GM12878 (cell line): ENCODE measurements at regions of chr13 and their contacts with region 1.

Region 1: DNA sequence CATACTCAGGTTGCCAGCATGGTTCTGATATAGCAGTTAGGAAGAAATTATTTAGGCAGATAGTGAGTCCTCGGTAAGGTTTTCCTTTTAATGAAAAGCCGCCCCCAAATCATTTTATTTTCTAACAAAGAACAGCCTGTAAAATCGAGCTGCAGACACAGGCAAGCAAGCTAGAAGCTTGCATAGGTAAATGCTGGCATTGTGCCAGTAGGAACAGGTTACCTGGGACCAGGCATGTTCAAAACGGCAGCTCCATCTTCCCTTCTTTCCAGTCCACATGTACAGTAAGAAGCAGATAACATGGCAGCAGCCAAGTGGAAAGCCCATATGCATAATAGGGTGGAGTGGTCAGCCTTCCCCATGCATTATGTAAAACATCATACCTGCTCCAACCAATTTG is 71.1 kb downstream of the UGGT2 start:
- DNase-seq: no peak
- ATAC-seq: no peak
- H3K4me3 ChIP-seq: no peak overlapping the region
- H3K27ac ChIP-seq: no peak overlapping the region
- H3K4me1 ChIP-seq: no peaks in the 10 kb centered on the region
- H3K27me3 ChIP-seq: no peaks in the 10 kb centered on the region
- CTCF ChIP-seq: no peak
- EP300 ChIP-seq: no peak
- POLR2A ChIP-seq: no peak
- RAD21 ChIP-seq: no peak

Region 2: GRCh38 chr13:95536632-95537241 is 445.4 kb before region 1 on chr13:
- CTCF ChIA-PET with region 1: interaction called, 4 read pairs
- POLR2A ChIA-PET with region 1: no interaction called
- RAD21 ChIA-PET with region 1: interaction called, 3 read pairs
- SMC1A ChIA-PET with region 1: interaction called, 3 read pairs
- in situ Hi-C with region 1: no loop called
- intact Hi-C with region 1: loop called (anchors 5 kb)
- DNase-seq: no peak
- ATAC-seq: peak; percentile 34; the same call in 2 of the 3 replicates
- H3K4me3 ChIP-seq: no peak overlapping the region
- H3K27ac ChIP-seq: no peak overlapping the region
- H3K4me1 ChIP-seq: no peaks in the 10 kb centered on the region
- H3K27me3 ChIP-seq: no peaks in the 10 kb centered on the region
- CTCF ChIP-seq: peak; percentile 34 to 50 (median 47); a peak in 5 of 6 replicates
- EP300 ChIP-seq: no peak
- POLR2A ChIP-seq: no peak
- RAD21 ChIP-seq: peak; percentile 51

Region 3: DNA sequence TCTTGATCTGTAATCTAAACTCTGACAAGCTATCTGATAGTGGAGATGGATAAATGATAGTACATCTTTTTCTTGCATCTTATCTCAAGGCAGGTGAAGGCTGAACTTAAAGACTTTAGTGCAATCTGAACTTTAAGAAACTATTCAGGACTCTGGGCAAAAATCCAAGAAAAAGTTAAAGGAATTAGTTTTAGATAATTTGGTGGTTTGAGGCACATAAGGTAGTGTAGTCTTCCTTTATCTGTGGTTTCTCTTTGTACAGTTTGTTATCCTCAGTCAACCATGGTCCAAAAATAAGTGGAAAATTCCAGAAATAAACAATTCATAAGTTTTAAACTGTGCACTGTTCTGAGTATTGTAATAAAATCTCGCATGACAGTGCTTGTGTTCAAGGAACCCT is 101.8 kb before region 1 on chr13:
- CTCF ChIA-PET with region 1: no interaction called
- POLR2A ChIA-PET with region 1: no interaction called
- RAD21 ChIA-PET with region 1: no interaction called
- SMC1A ChIA-PET with region 1: no interaction called
- in situ Hi-C with region 1: no loop called
- intact Hi-C with region 1: loop called (anchors 5 kb)
- DNase-seq: no peak
- ATAC-seq: no peak
- H3K4me3 ChIP-seq: no peak overlapping the region
- H3K27ac ChIP-seq: no peak overlapping the region
- H3K4me1 ChIP-seq: no peaks in the 10 kb centered on the region
- H3K27me3 ChIP-seq: no peaks in the 10 kb centered on the region
- CTCF ChIP-seq: no peak
- EP300 ChIP-seq: no peak
- POLR2A ChIP-seq: no peak
- RAD21 ChIP-seq: no peak

Region 4: GRCh38 chr13:95955255-95955654 is 26.9 kb before region 1 on chr13:
- CTCF ChIA-PET with region 1: no interaction called
- POLR2A ChIA-PET with region 1: no interaction called
- RAD21 ChIA-PET with region 1: no interaction called
- SMC1A ChIA-PET with region 1: no interaction called
- in situ Hi-C with region 1: no loop called
- intact Hi-C with region 1: no loop called
- DNase-seq: no peak
- ATAC-seq: peak; percentile 72
- H3K4me3 ChIP-seq: no peak overlapping the region
- H3K27ac ChIP-seq: no peak overlapping the region
- H3K4me1 ChIP-seq: no peaks in the 10 kb centered on the region
- H3K27me3 ChIP-seq: no peaks in the 10 kb centered on the region
- CTCF ChIP-seq: no peak
- EP300 ChIP-seq: no peak
- POLR2A ChIP-seq: no peak
- RAD21 ChIP-seq: no peak

Region 5: GRCh38 chr13:95968906-95969305 is 13.2 kb before region 1 on chr13:
- CTCF ChIA-PET with region 1: interaction called, 29 read pairs
- POLR2A ChIA-PET with region 1: no interaction called
- RAD21 ChIA-PET with region 1: no interaction called
- SMC1A ChIA-PET with region 1: interaction called, 10 read pairs
- in situ Hi-C with region 1: no loop called
- intact Hi-C with region 1: no loop called
- DNase-seq: no peak
- ATAC-seq: no peak
- H3K4me3 ChIP-seq: no peak overlapping the region
- H3K27ac ChIP-seq: no peak overlapping the region
- H3K4me1 ChIP-seq: no peaks in the 10 kb centered on the region
- H3K27me3 ChIP-seq: no peaks in the 10 kb centered on the region
- CTCF ChIP-seq: no peak
- EP300 ChIP-seq: no peak
- POLR2A ChIP-seq: no peak
- RAD21 ChIP-seq: no peak

Region 6: DNA sequence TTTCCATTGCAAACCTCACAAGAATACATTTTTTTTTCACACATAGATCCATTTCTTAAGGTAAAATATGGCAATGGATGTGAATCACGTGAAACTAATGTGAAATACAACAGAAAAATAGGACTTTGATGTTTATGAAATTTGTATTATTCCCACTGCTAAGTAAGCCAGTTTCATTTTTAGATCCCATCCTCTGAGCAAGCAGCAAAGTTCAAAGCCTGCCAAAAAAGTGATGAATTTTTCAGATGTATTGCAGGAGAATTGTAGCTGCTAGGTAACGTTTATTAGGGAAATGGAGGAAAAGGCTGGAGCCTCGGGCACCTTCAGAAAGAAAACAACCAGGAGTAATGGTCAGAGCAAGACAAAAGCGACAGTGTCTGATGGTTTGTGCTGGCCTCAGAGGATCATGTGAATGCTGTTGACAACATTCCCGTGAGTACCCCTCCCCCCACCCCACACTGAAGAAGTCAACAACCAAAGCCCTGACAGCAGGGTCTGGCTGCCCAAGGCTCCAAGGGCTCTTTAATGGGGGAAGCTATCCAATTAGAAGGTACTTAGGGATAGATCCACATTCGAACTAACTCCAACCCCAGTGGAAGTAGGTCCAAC is 916.6 kb after region 1 on chr13:
- CTCF ChIA-PET with region 1: no interaction called
- POLR2A ChIA-PET with region 1: no interaction called
- RAD21 ChIA-PET with region 1: no interaction called
- SMC1A ChIA-PET with region 1: no interaction called
- in situ Hi-C with region 1: no loop called
- intact Hi-C with region 1: no loop called
- DNase-seq: no peak
- ATAC-seq: no peak
- H3K4me3 ChIP-seq: no peak overlapping the region
- H3K27ac ChIP-seq: no peak overlapping the region
- H3K4me1 ChIP-seq: no peaks in the 10 kb centered on the region
- H3K27me3 ChIP-seq: no peaks in the 10 kb centered on the region
- CTCF ChIP-seq: no peak
- EP300 ChIP-seq: no peak
- POLR2A ChIP-seq: no peak
- RAD21 ChIP-seq: no peak